ENCODE measurements at regions of chr10 and their contacts with region 1.

Region 1: DNA sequence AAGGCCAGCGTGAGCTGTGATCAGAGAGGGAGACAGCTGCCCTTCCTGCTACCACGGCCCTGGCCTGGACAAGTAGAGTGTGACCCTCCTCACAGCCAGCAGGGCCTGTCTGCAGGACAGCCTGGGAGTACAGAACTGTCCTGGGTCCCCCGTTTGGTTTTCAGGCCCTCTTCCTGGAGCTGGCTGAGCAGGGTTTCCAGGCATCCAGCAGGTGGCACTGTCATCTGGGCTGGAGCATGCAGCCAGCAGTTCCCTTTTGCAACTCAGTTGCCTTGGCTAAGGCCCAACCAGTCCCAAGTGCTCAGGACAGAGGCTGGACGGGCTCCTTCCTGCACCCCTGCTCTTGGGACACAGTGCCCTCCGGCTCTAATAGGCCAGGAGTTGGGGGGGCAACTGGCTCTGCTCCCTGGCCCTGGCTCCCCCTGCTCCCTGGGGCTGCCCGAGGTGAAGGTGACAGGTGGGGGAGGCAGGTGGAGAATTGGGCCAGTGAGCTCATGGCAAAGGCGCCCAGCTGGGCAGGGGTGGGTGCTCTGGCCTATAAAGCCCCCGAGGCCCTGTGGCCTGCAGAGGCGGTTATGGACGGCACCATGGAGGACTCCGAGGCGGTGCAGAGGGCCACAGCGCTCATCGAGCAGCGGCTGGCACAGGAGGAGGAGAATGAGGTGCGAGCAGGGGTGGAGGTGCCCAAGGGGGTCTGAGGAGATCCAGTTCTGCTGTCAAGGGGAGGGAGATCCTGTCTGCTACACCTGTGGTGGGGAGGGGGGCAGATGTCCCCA is at the start of gene ANKRD2:
- DNase-seq: peak; percentile 64 to 85 (median 80)
- H3K4me3 ChIP-seq: no peak within 1 kb of the TSS
- H3K27ac ChIP-seq: peak within 1 kb of the TSS in 57 of 59 donors; percentile 4 to 90 (median 59)
- H3K27me3 ChIP-seq: no peaks in the 10 kb centered on the region
- CTCF ChIP-seq: peak; percentile 46 to 91 (median 84)
- total RNA-seq, gene ANKRD2: 0.43 to 9.5 (median 2.8) TPM

Region 2: GRCh38 chr10:97518301-97519043 is 53.9 kb before region 1 on chr10:
- intact Hi-C with region 1: no loop called
- DNase-seq: peak in 2 of 10 donors; percentile 22 to 28
- H3K4me3 ChIP-seq: no peak overlapping the region
- H3K27ac ChIP-seq: peak overlapping the region in 42 of 59 donors; percentile 2 to 77 (median 40)
- H3K27me3 ChIP-seq: no peaks in the 10 kb centered on the region
- CTCF ChIP-seq: no peak

Region 3: GRCh38 chr10:97612386-97612785 is 40.0 kb after region 1 on chr10:
- intact Hi-C with region 1: loop called (anchors 2 to 5 kb)
- DNase-seq: peak in 1 of 10 donors; percentile 36
- H3K4me3 ChIP-seq: no peak overlapping the region
- H3K27ac ChIP-seq: peak overlapping the region in 2 of 59 donors; percentile 14 to 51
- H3K27me3 ChIP-seq: no peaks in the 10 kb centered on the region
- CTCF ChIP-seq: peak in 49 of 56 donors; percentile 9 to 67 (median 42)

Measured in dorsolateral prefrontal cortex (tissue), 120 donors.